Activated naive CD4-positive, alpha-beta T cell treated with anti-CD3 and anti-CD28 coated beads for 36 hours (primary cell): ENCODE measurements at regions of chr7 and their contacts with region 1.

Region 1: DNA sequence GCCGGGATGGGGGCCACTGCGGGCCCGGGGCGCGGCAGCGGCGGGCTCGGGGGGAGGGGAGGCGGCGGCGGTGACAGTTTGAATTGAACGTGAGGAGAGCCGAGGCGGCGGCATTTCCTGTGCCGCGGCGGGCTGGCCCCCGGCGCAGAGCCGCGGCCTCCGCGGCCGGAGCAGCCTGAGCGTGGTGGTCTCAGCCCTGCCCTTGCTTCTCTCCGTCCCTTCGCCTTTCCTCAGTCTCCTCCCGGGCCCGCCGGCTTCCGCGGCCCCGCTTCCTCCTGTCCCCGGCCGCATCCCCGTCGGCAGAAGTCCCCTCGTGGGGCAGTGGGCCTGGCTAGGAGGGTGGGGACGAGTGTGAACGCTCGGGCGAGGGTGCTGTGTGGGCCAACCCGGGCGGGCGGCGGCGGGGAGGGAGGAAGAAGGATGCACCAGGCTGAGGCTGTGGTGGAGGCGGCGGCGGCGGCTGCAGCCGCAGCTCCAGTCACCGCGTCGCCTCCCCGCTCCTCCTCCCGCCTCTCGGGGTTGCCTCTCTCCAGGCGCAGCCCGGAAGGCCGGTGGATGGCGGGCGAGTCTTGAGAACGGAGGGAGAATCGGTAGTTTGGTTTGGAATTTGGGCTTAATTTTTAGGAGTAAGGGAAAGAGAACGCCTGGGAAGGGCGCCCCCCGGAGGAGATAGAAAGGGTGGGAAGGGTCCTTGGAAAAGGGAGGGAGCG is 690 bp downstream of the SEPTIN7 start:
- DNase-seq: peak; percentile 75
- H3K4me3 Mint-ChIP-seq: peak overlapping the region; percentile 96
- H3K27ac Mint-ChIP-seq: peak overlapping the region; percentile 97
- H3K4me1 Mint-ChIP-seq: peaks cover 46% of the 10 kb centered on the region
- H3K27me3 Mint-ChIP-seq: no peaks in the 10 kb centered on the region

Region 2: DNA sequence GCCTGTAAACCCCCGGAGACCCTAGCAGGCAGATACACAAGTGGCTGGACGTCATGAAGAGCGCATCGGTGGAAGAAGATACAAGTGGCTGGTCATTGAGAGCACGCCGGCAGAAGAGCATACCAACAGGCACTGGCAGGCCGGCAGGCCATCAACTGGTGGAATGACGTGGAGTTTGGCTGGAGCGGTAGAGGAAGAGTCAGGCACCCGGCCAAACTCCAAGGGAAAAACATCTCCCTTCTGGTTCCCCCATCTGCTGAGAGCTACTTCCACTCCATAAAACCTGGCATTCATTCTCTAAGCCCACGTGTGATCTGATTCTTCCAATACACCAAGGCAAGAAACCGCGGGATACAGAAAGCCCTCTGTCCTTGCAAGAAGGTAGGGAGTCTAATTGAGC is 1256.9 kb before region 1 on chr7:
- CTCF ChIA-PET with region 1: no interaction called
- intact Hi-C with region 1: no loop called
- DNase-seq: no peak
- H3K4me3 Mint-ChIP-seq: no peak overlapping the region
- H3K27ac Mint-ChIP-seq: no peak overlapping the region
- H3K4me1 Mint-ChIP-seq: no peaks in the 10 kb centered on the region
- H3K27me3 Mint-ChIP-seq: no peaks in the 10 kb centered on the region

Region 3: GRCh38 chr7:35707422-35707821 is 94.1 kb before region 1 on chr7:
- CTCF ChIA-PET with region 1: interaction called, 10 read pairs
- intact Hi-C with region 1: loop called (anchors 1 kb)
- DNase-seq: no peak
- H3K4me3 Mint-ChIP-seq: no peak overlapping the region
- H3K27ac Mint-ChIP-seq: no peak overlapping the region
- H3K4me1 Mint-ChIP-seq: peaks cover 7% of the 10 kb centered on the region
- H3K27me3 Mint-ChIP-seq: no peaks in the 10 kb centered on the region

Region 4: DNA sequence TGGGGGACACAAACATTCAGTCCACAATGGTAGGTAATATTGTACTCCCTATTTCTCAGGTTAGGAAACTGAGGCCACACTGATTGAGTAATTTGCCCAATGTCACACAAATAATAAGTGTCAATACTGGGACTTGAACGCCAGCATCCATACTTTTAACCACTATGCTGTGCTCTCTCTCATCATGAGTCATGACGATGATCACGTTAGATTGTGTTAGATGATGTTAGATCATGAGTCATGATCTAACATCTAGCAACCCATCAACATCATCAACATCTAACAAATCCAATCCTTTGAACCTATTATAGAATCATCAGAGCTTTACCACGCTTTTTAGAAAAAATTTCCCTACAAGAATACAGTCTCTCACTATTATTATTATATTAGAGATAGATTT is 78.5 kb before region 1 on chr7:
- CTCF ChIA-PET with region 1: interaction called, 4 read pairs
- intact Hi-C with region 1: loop called (anchors 1 kb)
- DNase-seq: peak; percentile 22
- H3K4me3 Mint-ChIP-seq: no peak overlapping the region
- H3K27ac Mint-ChIP-seq: peak overlapping the region; percentile 59
- H3K4me1 Mint-ChIP-seq: peaks cover 43% of the 10 kb centered on the region
- H3K27me3 Mint-ChIP-seq: no peaks in the 10 kb centered on the region

Region 5: GRCh38 chr7:35839860-35840854 is 38.6 kb after region 1 on chr7:
- CTCF ChIA-PET with region 1: interaction called, 4 read pairs
- intact Hi-C with region 1: loop called (anchors 5 kb)
- DNase-seq: no peak
- H3K4me3 Mint-ChIP-seq: no peak overlapping the region
- H3K27ac Mint-ChIP-seq: no peak overlapping the region
- H3K4me1 Mint-ChIP-seq: peaks cover 39% of the 10 kb centered on the region
- H3K27me3 Mint-ChIP-seq: no peaks in the 10 kb centered on the region

Region 6: DNA sequence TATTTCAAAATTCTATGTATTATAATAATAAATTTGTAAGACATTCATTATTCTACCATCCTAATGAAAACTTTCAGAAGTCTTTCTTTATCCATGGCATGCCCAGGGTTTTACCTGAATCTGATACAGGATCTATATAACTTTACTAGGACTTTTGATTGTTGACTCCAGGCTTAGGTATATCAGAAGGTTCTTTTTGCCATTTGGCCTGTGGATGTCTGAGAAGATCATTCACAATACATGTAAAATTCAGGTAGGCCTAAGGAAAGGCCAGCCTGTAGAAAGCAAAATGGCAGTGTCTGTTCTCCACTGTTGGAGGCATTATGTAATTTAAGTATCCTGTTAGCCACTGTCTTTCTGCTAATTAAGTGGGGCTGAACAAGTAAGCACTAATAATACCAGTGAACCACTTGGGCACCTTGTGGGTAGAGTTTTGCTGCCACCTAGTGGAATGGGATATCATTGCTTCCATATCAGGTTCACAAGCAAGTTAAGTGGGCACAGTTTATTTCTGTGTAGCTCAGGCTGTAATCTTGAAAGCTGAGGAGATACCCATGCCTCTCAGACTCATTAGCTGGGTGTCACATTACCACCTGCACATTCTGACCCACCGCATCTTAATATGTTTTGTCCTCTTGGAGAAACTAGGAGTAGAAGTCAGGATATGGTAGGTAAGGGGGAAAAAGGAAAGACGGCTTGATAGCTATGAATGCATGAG is 104.8 kb after region 1 on chr7:
- CTCF ChIA-PET with region 1: interaction called, 9 read pairs
- intact Hi-C with region 1: loop called (anchors 1 kb)
- DNase-seq: peak; percentile 82
- H3K4me3 Mint-ChIP-seq: no peak overlapping the region
- H3K27ac Mint-ChIP-seq: no peak overlapping the region
- H3K4me1 Mint-ChIP-seq: peaks cover 4% of the 10 kb centered on the region
- H3K27me3 Mint-ChIP-seq: no peaks in the 10 kb centered on the region

Region 7: GRCh38 chr7:36291387-36292316 is 490.1 kb after region 1 on chr7:
- CTCF ChIA-PET with region 1: no interaction called
- intact Hi-C with region 1: loop called (anchors 1 kb)
- DNase-seq: peak; percentile 79
- H3K4me3 Mint-ChIP-seq: peak overlapping the region; percentile 59
- H3K27ac Mint-ChIP-seq: no peak overlapping the region
- H3K4me1 Mint-ChIP-seq: peaks cover 24% of the 10 kb centered on the region
- H3K27me3 Mint-ChIP-seq: no peaks in the 10 kb centered on the region